ENCODE measurements at regions of chr20 and their contacts with region 1.

Region 1: DNA sequence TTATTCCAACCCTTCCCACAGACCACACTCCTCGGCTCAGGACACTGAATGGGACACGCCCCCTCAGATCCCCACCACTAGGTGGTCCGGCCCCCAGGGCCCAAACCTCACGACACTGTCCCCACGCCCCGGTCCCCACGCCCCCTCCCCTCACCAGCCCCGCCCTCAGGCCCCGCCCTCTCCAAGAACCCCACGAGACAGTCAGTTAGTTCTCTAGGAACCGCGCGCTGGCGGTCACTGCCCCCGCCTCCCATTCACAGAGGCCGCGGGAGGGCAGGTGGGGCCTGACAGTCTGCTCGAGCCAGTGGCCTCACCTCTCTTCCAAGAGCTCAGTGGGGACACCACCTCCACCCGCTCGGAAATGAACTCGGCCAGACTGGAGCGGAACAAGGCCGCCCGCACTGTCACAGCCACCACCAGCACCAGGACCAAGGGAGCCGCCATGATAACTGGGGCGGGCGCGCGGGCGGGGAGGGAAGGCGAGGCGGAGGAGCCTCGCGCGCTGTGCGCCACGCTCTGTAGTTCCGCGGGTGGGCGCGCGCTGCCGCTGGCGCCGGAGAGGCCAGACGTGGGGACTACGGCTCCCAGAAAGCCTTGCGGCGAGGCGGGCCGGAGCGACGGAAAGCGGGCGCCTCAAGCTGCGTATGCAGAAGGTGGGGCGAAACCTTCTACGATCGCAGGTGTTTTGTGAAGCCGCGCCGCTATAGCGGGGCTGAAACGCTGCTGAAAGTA is at the start of gene PIGU:
- DNase-seq: peak; percentile 81 to 97
- H3K4me3 ChIP-seq: peak within 1 kb of the TSS; percentile 65 to 98
- H3K27ac ChIP-seq: peak within 1 kb of the TSS; percentile 64 to 74
- H3K4me1 ChIP-seq: peaks cover 0 to 2% of the 10 kb centered on the region in 2 donors
- H3K27me3 ChIP-seq: no peaks in the 10 kb centered on the region
- CTCF ChIP-seq: peak; percentile 33 to 37 (median 34)
- total RNA-seq, gene PIGU: 41.5 TPM

Region 2: GRCh38 chr20:34709831-34710567 is 33.2 kb after region 1 on chr20:
- intact Hi-C with region 1: loop called (anchors 1 kb)
- DNase-seq: peak in 1 of 2 donors; percentile 80
- H3K4me3 ChIP-seq: peak overlapping the region; percentile 76 to 78
- H3K27ac ChIP-seq: peak overlapping the region; percentile 73 to 88
- H3K4me1 ChIP-seq: peaks cover 6 to 9% of the 10 kb centered on the region in 2 donors
- H3K27me3 ChIP-seq: no peaks in the 10 kb centered on the region
- CTCF ChIP-seq: peak in 1 of 3 experiments; percentile 4

Measured in ascending aorta (tissue), 2 donors.